ENCODE measurements at regions of chr14 and their contacts with region 1.

Region 1: DNA sequence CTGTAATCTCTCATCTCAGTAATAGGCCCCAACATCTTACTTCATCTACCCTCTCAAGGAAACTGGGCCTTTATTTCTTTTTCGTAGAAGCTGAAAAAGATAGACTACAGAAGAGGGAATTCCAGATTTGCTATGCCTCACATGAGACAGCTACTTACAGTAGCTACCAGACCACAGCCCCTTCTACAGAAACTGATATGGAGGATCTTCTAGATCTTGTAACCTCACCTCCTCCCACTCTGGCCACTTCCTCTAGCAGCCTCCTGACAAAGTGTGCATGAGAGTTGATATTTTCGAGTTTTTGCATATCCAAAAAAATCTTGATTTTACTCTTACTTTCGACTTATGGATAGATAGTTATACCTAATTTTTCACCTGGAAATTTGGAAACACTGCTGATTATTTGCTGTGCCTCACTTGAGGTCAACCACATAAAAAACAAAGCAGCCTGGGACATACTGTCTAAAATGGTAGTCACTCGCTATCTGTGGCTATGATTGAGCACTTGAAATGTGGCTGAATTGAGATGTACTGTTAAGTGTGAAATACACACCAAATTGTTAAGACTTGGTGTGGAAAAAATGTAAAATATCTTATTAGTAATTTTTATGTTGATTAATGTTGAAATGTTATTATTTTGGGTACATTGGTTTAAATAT is 86.3 kb upstream of the NID2 start:
- DNase-seq: no peak
- H3K4me3 ChIP-seq: no peak overlapping the region
- H3K27ac ChIP-seq: no peak overlapping the region
- H3K4me1 ChIP-seq: no peaks in the 10 kb centered on the region
- H3K27me3 ChIP-seq: peaks cover 4% of the 10 kb centered on the region
- CTCF ChIP-seq: no peak

Region 2: GRCh38 chr14:52124791-52125661 is 30.1 kb before region 1 on chr14:
- CTCF ChIA-PET with region 1: no interaction called
- dilution Hi-C with region 1: no loop called
- in situ Hi-C with region 1: no loop called
- intact Hi-C with region 1: no loop called
- DNase-seq: peak; percentile 21
- H3K4me3 ChIP-seq: no peak overlapping the region
- H3K27ac ChIP-seq: peak overlapping the region; percentile 13
- H3K4me1 ChIP-seq: peaks cover 6% of the 10 kb centered on the region
- H3K27me3 ChIP-seq: no peaks in the 10 kb centered on the region
- CTCF ChIP-seq: no peak

Region 3: DNA sequence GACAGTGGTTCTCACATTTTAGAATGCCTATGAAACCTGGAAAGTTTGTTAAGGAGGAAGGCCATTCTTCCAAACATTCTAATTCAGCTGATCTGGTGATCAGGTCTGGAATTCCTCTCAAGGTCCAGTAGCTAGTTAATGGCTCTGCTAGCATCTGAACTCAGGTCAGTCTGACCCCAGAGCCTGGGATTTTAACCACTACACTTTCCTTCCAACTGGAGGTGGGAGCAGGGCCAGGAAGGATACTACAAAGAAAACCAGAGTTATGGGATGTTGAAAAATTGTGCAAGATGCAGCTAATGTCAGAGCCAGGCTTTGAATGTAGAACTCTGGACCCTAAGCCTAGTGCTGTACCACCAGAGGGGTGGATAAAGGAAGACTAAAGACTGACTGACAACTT is 12.6 kb before region 1 on chr14:
- CTCF ChIA-PET with region 1: no interaction called
- dilution Hi-C with region 1: no loop called
- in situ Hi-C with region 1: no loop called
- intact Hi-C with region 1: no loop called
- DNase-seq: no peak
- H3K4me3 ChIP-seq: no peak overlapping the region
- H3K27ac ChIP-seq: no peak overlapping the region
- H3K4me1 ChIP-seq: no peaks in the 10 kb centered on the region
- H3K27me3 ChIP-seq: peaks cover 3% of the 10 kb centered on the region
- CTCF ChIP-seq: no peak

Region 4: DNA sequence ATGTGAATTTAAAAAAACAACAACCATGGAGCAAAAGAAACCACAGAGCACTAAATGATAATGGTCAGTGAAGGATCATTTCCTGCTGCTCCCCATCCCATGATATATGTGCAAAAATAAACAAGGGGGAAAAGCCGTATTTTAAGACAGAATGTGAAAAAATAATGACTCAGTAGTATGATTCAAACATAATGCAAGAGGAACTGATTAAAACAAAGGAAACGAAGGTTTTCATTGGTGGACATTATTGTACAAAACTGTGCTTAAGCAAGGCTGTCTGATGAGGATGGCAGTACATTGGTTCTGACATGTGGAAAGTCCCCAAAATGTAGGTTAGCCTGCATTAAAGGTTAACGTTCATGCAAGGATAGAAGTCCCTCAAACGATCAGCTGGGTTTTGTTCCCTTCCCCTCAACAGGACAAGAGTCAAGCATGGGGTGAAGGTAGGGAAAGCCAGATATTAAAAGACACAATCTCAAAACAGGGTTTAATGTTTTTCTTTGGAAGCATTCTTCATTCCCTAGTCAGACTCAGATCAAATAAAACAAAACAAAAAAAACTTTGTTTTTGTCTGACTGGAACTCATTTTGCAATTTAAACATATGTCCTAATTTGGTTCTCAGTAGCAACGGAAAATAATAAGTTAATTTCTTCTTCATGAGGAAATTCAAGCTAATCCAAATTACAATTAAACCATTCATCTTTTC is 86.1 kb after region 1 on chr14:
- CTCF ChIA-PET with region 1: no interaction called
- dilution Hi-C with region 1: loop called (anchors 5 kb)
- in situ Hi-C with region 1: no loop called
- intact Hi-C with region 1: no loop called
- DNase-seq: peak; percentile 33
- H3K4me3 ChIP-seq: no peak overlapping the region
- H3K27ac ChIP-seq: no peak overlapping the region
- H3K4me1 ChIP-seq: no peaks in the 10 kb centered on the region
- H3K27me3 ChIP-seq: peaks cover 17% of the 10 kb centered on the region
- CTCF ChIP-seq: no peak